GM18951 (cell line): ENCODE measurements at regions of chr13 and their contacts with region 1.

Region 1: GRCh38 chr13:98445340-98446233 is 131.3 kb downstream of the STK24 start:
- POLR2A ChIP-seq: no peak

Region 2: GRCh38 chr13:97548138-97548537 is 897.4 kb before region 1 on chr13:
- in situ Hi-C with region 1: no loop called
- POLR2A ChIP-seq: no peak

Region 3: GRCh38 chr13:98658214-98658530 is 212.6 kb after region 1 on chr13:
- in situ Hi-C with region 1: loop called (anchors 5 kb)
- POLR2A ChIP-seq: no peak

Region 4: DNA sequence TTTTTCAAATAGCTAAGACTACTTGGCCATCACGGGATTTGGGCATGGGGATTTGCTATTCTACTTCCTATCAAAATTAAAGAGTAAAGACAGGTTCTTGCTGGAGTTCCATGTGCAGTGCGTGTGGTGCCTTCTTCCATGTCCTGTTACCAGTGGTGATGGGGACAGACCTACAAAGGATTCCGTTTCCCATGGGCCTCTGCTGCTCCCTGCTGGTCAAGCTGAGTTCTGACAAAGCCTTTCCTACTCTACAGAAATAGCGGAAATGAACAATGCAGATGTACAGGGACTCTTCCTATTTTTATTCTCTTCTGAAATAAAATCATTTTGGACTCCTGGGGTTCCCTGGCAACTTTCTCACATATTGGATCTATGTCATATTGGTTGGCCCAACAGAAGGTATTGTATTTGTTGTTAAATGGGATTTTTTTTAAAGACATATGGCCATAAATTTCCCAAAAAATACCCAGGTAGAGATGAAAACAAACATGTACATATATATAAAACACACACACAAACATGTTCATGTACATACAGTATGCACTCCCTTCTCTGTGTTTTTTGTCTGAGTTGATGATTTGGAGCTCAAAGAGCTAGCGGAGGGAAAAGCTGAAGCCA is 397.4 kb after region 1 on chr13:
- in situ Hi-C with region 1: loop called (anchors 25 kb)
- POLR2A ChIP-seq: no peak